HEK293 (cell line): ENCODE measurements at regions of chr16 and their contacts with region 1.

Region 1: GRCh38 chr16:24504472-24505345 is 34.7 kb upstream of the RBBP6 start:
- H3K4me3 ChIP-seq: no peak overlapping the region
- H3K27ac ChIP-seq: no peak overlapping the region
- H3K4me1 ChIP-seq: no peaks in the 10 kb centered on the region
- CTCF ChIP-seq: peak; percentile 81

Region 2: GRCh38 chr16:24036614-24037013 is 468.1 kb before region 1 on chr16:
- CTCF ChIA-PET with region 1: interaction called, 195 read pairs
- POLR2A ChIA-PET with region 1: no interaction called
- H3K4me3 ChIP-seq: no peak overlapping the region
- H3K27ac ChIP-seq: no peak overlapping the region
- H3K4me1 ChIP-seq: no peaks in the 10 kb centered on the region
- CTCF ChIP-seq: peak; percentile 75

Region 3: DNA sequence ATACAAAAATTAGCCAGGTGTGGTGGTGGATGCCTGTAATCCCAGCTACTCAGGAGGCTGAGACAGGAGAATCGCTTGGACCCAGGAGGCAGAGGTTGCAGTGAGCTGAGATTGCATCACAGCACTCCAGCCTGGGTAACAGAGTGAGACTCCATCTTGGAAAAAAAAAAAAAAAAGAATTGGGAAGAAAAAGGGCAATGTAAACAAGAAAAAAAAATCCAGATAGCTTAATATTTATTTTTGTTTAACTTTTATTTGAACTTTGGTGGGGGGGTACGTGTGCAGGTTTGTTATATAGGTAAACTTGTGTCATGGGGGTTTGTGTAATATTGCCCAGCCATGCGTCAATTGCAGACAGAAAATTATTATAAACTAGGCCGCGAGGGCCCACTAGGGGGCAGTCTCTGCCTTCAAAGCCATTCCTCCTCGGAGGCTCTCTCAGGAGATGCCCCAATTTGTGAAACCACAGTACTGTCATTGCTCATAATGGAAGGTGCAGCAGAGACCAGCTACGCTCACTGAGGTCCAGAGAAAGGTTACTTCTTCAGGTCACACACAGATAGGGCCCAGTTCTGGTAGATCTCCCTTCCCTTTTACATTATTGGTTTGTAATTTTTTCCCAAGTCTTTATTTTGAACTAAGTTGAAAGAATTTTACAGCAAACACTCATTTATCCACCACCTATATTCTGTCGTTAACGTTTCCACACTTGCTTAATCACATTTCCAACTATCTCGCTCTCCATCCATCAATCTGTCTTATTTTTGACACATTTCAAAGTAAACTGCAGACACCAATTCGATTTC is 462.7 kb before region 1 on chr16:
- CTCF ChIA-PET with region 1: interaction called, 195 read pairs
- POLR2A ChIA-PET with region 1: no interaction called
- H3K4me3 ChIP-seq: no peak overlapping the region
- H3K27ac ChIP-seq: no peak overlapping the region
- H3K4me1 ChIP-seq: no peaks in the 10 kb centered on the region
- CTCF ChIP-seq: peak; percentile 68

Region 4: GRCh38 chr16:24070851-24071250 is 433.9 kb before region 1 on chr16:
- CTCF ChIA-PET with region 1: interaction called, 30 read pairs
- POLR2A ChIA-PET with region 1: no interaction called
- H3K4me3 ChIP-seq: no peak overlapping the region
- H3K27ac ChIP-seq: no peak overlapping the region
- H3K4me1 ChIP-seq: no peaks in the 10 kb centered on the region
- CTCF ChIP-seq: no peak

Region 5: DNA sequence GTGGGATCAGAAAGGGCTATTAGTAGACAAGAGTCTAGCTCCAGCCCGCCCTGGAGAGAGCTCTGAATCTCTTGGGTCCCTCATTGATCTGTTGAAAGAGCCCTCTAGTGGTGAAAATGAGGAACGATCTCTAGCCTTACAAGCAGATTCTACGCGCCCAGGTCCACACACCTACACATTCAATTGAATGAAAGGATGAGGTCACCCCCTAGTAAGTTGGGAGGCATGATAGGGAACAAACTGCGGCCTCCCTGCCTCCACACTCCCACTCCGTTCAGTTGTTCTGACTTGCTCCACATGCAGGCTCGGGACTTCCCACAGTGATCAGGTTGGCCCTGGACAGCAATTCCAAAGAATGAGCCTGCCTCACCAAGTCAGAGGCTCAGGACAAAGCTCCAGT is 251.5 kb before region 1 on chr16:
- CTCF ChIA-PET with region 1: interaction called, 27 read pairs
- POLR2A ChIA-PET with region 1: no interaction called
- H3K4me3 ChIP-seq: no peak overlapping the region
- H3K27ac ChIP-seq: no peak overlapping the region
- H3K4me1 ChIP-seq: no peaks in the 10 kb centered on the region; the same call in 1 of the 2 replicates
- CTCF ChIP-seq: no peak

Region 6: DNA sequence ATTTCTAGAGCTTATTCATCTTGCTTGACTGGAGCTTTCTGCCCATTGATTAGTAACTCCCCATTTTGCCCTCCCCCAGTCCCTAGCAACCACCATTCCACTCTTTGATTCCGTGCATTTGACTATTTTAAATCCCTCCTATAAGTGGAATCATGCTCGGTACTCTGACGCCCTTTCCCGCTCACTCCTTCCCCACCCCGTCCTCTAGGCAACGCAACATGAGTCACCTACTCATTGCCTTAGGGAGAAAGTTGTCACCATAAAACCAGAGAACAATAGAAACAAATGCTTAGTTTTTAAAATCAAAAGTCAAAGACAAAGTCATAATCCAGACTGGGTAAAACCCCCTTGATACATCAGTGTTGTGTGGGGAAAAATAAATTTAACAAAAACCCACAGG is 10.8 kb before region 1 on chr16:
- CTCF ChIA-PET with region 1: interaction called, 14 read pairs
- POLR2A ChIA-PET with region 1: no interaction called
- H3K4me3 ChIP-seq: no peak overlapping the region
- H3K27ac ChIP-seq: no peak overlapping the region
- H3K4me1 ChIP-seq: no peaks in the 10 kb centered on the region; the same call in 1 of the 2 replicates
- CTCF ChIP-seq: no peak

Region 7: DNA sequence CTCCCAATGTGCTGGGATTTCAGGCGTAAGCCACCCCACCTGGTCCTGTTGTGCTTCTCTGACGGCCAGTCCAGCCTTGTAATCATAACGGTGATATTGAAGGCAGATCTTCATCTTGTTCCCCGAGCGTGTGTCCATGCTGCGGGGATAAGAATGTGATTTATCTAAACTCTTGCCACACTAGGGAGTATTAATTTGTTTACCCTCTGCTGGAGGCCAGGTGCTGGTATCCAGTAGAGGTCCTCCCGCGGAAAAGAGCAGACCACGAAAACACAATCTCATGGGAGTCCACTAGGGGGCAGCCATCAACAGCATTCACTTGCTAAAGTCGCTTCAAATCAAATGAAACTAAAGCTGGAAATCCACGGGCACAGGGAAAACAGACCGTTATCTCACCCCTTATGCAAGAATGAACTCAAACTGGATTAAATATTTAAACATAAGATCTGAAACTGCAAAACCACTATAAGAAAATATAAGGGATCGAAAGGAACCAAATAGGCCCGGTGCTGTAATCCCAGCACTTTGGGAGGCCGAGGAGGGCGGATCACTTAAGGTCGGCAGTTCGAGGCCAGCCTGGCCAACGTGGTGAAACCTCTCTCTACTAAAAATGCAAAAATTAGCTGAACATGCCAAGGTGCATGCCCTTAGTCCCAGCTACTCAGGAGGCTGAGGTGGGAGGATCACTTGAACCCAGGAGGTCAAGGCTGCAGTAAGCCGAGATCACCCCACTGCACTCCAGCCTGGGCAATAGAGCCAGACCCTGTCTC is 12.4 kb after region 1 on chr16:
- CTCF ChIA-PET with region 1: interaction called, 11 read pairs
- POLR2A ChIA-PET with region 1: no interaction called
- H3K4me3 ChIP-seq: no peak overlapping the region
- H3K27ac ChIP-seq: no peak overlapping the region
- H3K4me1 ChIP-seq: no peaks in the 10 kb centered on the region
- CTCF ChIP-seq: peak; percentile 83

Region 8: GRCh38 chr16:24539291-24539849 is 34.7 kb after region 1 on chr16 and contains the start of gene RBBP6:
- CTCF ChIA-PET with region 1: no interaction called
- POLR2A ChIA-PET with region 1: no interaction called
- H3K4me3 ChIP-seq: peak within 1 kb of the TSS; percentile 99
- H3K27ac ChIP-seq: peak within 1 kb of the TSS; percentile 98
- H3K4me1 ChIP-seq: peaks cover 10% of the 10 kb centered on the region
- CTCF ChIP-seq: peak; percentile 98

Region 9: DNA sequence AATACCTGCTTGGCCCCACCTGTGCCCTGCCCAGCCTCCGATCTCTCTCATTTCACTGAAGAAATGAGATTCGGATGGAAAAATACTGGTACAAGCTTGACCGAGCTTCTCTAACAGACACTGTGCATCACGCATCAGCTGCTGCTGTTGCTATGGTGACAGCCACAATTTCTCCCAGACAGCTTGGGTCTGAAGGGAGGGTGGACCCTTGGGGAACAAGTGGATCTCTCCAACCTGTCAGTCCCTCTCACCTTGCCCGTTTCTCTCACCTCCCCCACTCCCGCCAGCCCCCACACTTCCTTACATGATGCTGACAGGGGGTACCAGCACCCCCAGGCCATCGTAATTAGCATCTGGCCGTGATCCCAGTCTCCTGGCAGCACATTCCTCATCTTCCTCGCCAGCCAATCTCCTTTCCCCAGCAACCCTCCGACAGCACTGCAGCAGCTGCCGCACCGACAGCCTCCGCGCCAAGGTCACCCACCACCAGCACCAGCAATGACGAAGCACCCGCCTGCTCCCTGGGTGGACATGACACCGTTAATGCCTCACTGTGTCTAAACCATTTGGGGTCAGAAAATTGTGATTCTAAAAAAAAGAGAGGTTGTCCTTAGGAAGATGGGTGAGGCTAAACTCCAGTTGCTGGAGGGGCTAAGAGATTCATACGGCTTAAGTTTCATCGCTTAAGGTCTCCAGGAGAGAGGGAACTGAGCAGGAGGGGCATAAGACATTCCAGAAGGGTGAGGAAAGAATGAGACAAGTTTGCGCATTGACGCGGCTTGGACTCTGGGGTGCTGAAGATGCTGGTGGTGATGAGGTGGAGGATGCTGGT is 166.1 kb after region 1 on chr16:
- CTCF ChIA-PET with region 1: no interaction called
- POLR2A ChIA-PET with region 1: no interaction called
- H3K4me3 ChIP-seq: peak overlapping the region; percentile 6; the same call in 1 of the 2 replicates
- H3K27ac ChIP-seq: no peak overlapping the region
- H3K4me1 ChIP-seq: no peaks in the 10 kb centered on the region
- CTCF ChIP-seq: no peak